K562 (cell line): ENCODE measurements at regions of chr1 and their contacts with region 1.

Region 1: DNA sequence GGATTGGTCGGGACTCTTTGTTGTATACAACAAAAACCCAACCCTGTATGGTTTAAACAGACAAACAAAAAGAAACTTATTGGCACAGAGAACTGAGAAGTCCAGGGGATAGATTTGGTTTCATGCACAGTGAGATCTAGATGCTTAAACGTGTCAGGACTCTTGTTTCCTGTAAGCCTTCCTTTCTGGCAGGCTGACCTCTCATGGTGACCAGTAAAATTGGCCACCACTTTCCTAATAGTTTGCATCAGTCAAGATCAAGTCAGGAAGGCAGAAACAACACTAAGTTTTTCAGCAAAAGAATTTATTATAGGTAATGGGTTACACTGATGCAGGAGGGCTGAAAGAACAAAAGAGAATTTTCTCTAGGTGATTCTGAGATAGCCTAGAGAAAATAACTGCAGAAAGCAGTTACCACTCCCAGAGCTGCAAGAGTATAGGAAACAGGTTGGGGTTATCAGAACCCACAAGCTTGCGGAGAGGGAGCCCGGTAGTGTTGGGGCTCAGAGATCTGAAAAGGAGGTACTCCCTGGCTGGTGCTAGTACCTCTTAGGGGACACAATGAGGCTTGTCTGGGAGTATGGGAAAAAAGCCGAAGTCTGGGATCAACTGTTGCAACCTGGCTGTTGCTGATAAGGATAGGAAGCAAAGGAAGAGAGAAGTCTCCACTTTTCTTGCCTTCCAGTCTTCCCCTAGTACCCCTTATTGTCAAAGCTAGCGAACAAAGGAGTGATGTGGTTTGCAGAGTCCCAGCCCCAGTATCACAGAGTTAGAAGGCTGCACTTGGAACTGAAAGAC is 21.4 kb downstream of the CITED4 start:
- DNase-seq: peak; percentile 77 to 90 (median 88)
- ATAC-seq: peak; percentile 76
- H3K4me3 ChIP-seq: no peak overlapping the region; the same call in 1 of the 2 replicates
- H3K27ac ChIP-seq: peak overlapping the region; percentile 60
- H3K4me1 ChIP-seq: peaks cover 45 to 54% of the 10 kb centered on the region in 2 experiments
- H3K27me3 ChIP-seq: no peaks in the 10 kb centered on the region
- CTCF ChIP-seq: peak; percentile 39 to 45 (median 40); a peak in 4 of 6 replicates
- EP300 ChIP-seq: peak; percentile 92
- POLR2A ChIP-seq: no peak
- RAD21 ChIP-seq: peak; percentile 45 to 55; a peak in 3 of 4 replicates

Region 2: DNA sequence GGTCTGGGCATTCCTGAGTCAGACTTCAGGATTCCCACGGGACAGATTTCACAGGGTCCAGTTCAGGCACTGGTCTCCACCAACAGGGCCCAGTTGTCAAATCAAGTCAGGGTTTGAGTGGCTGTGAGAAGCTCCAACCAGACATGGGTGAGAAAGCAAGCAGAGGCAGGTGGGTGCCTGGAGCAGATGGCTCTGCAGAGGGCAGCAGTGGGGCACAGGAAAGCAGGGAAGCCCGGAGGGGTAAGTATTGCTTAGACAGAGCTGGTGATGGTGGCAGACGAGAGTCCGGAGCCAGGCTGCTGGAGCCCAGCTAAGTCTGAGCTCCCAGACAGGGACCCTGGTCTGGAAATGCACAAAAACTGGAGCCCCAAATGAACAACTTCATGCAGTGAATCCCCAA is 215.7 kb before region 1 on chr1:
- CTCF ChIA-PET with region 1: no interaction called
- POLR2A ChIA-PET with region 1: no interaction called
- in situ Hi-C with region 1: loop called (anchors 5 kb)
- intact Hi-C with region 1: no loop called
- DNase-seq: no peak
- ATAC-seq: peak; percentile 42
- H3K4me3 ChIP-seq: no peak overlapping the region
- H3K27ac ChIP-seq: no peak overlapping the region
- H3K4me1 ChIP-seq: peaks cover 0 to 5% of the 10 kb centered on the region in 2 experiments; a peak in 3 of 5 replicates
- H3K27me3 ChIP-seq: peaks cover 22 to 70% of the 10 kb centered on the region in 2 experiments
- CTCF ChIP-seq: peak; percentile 17 to 42 (median 19); a peak in 2 of 6 replicates
- EP300 ChIP-seq: no peak
- POLR2A ChIP-seq: no peak
- RAD21 ChIP-seq: peak in 1 of 2 experiments; percentile 29; a peak in 2 of 4 replicates

Region 3: DNA sequence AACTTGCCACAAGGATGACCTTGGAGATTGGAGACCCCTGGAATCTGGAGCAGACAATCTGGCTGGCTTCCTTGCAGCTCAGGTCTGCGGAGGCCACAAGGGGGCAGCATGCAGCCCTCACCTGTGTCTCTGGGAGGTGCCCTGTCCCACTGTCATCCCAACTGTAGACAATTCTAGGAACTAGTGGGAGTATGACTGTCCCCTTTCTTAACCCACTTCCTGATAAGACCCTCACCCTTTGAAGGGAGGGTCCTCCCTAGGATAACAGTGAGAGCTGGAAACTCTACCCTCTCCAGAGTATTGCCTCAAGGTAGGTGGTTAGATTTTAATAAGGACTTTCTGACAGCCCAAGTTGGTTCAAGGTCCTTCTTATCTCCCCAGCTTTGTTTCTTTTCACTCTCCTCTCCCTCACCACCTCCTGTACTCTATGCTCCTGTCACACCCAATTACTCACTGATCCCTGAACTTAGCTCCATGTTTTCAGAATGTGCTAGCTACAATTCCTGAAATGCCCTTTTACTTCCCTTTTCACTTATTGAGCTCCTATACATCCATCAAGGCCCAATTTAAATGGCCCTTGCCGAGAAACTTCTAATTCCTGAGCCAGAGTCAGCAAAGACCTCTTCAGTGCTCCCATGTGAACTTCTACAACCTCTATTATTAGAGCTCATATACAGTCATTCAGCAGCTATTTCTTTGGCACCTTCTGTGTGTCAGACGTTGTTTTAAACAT is 66.3 kb before region 1 on chr1:
- CTCF ChIA-PET with region 1: interaction called, 4 read pairs
- POLR2A ChIA-PET with region 1: interaction called, 3 read pairs
- in situ Hi-C with region 1: no loop called
- intact Hi-C with region 1: loop called (anchors 1 kb)
- DNase-seq: peak; percentile 77 to 87 (median 82)
- ATAC-seq: peak; percentile 96
- H3K4me3 ChIP-seq: no peak overlapping the region
- H3K27ac ChIP-seq: peak overlapping the region; percentile 49
- H3K4me1 ChIP-seq: peaks cover 0 to 14% of the 10 kb centered on the region in 2 experiments; a peak in 4 of 5 replicates
- H3K27me3 ChIP-seq: no peaks in the 10 kb centered on the region
- CTCF ChIP-seq: peak; percentile 93 to 98 (median 94)
- EP300 ChIP-seq: peak; percentile 51; the same call in 1 of the 2 replicates
- POLR2A ChIP-seq: no peak
- RAD21 ChIP-seq: peak; percentile 90 to 94

Region 4: DNA sequence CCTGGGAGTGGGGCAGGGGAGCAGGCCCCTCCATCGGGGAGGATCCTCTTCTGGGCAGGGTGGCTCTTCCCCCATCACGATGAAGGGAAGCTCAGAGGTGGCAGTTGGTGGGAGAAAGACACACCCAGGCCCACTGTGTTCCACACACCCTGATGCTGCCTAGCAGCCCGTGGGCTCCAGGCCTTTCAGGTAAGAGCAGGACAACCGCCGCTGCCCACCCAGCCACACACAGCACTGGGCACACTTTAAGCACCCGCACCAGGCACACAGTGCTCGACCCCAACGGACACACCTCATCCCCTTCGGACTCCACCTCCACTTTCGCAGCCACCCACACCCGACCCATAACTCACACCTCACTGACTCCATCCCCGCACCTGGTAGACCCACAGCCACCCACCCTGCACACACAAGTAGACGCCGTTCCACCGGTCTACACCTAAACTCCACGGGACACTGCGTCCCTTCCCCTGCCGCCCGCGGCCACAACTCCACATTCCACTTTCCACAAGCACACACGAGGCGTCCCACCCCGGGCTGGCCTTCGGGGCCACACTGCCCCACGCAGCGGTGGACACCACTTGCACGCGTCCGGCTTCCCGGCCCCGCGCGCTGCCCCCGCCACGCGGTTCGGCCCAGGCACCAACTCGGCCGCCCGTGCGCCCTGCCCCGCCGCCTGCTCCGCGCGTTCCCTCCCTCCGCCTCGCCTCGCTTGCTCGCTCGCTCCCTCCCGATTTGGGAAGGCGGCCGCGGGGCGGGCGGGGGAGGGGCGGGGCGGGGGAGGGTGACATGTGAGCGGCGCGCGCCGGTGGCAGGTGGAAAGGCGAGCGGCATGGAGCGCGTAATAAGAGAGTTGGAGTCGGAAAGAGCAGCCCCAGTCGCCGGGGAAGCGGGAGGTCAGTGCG is 57.5 kb before region 1 on chr1 and contains the start of gene KCNQ4:
- CTCF ChIA-PET with region 1: no interaction called
- POLR2A ChIA-PET with region 1: interaction called, 5 read pairs
- in situ Hi-C with region 1: loop called (anchors 5 kb)
- intact Hi-C with region 1: no loop called
- DNase-seq: peak; percentile 79 to 90 (median 84)
- ATAC-seq: peak; percentile 76
- H3K4me3 ChIP-seq: peak within 1 kb of the TSS; percentile 37
- H3K27ac ChIP-seq: peak within 1 kb of the TSS; percentile 47; the same call in 1 of the 3 replicates
- H3K4me1 ChIP-seq: peaks cover 15 to 32% of the 10 kb centered on the region in 2 experiments
- H3K27me3 ChIP-seq: no peaks in the 10 kb centered on the region
- CTCF ChIP-seq: no peak
- EP300 ChIP-seq: no peak
- POLR2A ChIP-seq: no peak
- RAD21 ChIP-seq: no peak
- polyA plus RNA-seq, gene KCNQ4: 0.07 to 0.27 TPM

Region 5: DNA sequence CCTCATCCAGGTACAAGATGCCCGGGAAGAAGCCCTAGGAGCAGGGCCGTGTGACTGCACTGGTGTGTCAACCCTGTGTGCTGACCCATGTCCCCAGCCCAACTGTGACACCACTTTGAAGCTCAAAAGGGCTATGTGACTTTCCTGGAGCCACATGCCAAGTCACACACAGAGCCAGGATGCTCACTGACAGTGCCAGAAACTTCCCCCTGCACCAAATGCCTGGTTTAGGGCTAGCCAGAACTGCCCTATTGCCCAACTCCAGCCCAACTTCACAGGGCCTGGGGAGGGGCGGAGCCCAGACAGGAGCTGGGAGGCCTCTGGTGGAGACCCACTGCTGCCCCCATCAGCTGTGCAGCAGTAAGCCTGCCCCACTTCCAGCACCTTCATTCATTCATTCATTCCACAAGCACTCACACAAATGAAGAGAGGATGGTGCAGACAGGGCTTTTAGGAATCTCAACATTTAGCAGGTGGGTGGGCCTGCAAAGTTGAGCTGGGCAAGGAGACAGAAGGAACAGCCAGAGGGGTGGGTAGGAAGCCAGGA is 20.4 kb before region 1 on chr1:
- CTCF ChIA-PET with region 1: no interaction called
- POLR2A ChIA-PET with region 1: interaction called, 5 read pairs
- in situ Hi-C with region 1: no loop called
- intact Hi-C with region 1: loop called (anchors 1 kb)
- DNase-seq: peak; percentile 73 to 82 (median 78)
- ATAC-seq: peak; percentile 80
- H3K4me3 ChIP-seq: no peak overlapping the region
- H3K27ac ChIP-seq: peak overlapping the region; percentile 71
- H3K4me1 ChIP-seq: peaks cover 30 to 78% of the 10 kb centered on the region in 2 experiments
- H3K27me3 ChIP-seq: no peaks in the 10 kb centered on the region
- CTCF ChIP-seq: peak; percentile 45 to 63 (median 58)
- EP300 ChIP-seq: no peak
- POLR2A ChIP-seq: no peak
- RAD21 ChIP-seq: peak in 1 of 2 experiments; percentile 45; a peak in 2 of 4 replicates